Dendritic cell treated with granulocyte-macrophage colony-stimulating factor and Interleukin-4, amounts not matched to agents 40 ng/mL and 50 ng/mL, for 4 days (primary cell): ENCODE measurements at regions of chr14 and their contacts with region 1.

Region 1: GRCh38 chr14:31026395-31027118 is 378 bp upstream of the STRN3 start:
- H3K4me3 Mint-ChIP-seq: peak overlapping the region; percentile 94
- H3K27ac Mint-ChIP-seq: peak overlapping the region; percentile 98
- H3K4me1 Mint-ChIP-seq: peaks cover 41% of the 10 kb centered on the region
- H3K27me3 Mint-ChIP-seq: no peaks in the 10 kb centered on the region

Region 2: DNA sequence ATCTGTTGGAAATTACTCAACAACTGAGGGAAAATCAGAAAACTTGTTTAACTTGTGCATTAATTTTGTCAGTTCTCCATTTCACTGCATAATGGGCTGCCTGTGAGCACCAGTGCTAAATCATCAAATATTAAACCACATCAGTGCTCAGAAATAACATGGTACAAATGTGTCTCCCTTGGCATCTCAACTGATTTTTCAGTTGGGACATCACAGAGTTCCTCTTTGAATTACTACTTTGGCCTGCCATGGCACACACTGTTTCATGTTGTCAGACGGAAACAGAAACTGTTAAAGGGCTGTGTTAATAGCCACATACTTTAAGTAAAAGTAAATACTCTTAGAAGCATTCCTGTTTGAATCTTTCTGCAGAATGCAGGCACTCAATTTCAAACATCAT is 41.7 kb after region 1 on chr14:
- intact Hi-C with region 1: loop called (anchors 5 kb)
- H3K4me3 Mint-ChIP-seq: no peak overlapping the region
- H3K27ac Mint-ChIP-seq: no peak overlapping the region
- H3K4me1 Mint-ChIP-seq: no peaks in the 10 kb centered on the region
- H3K27me3 Mint-ChIP-seq: no peaks in the 10 kb centered on the region

Region 3: GRCh38 chr14:31084385-31084784 is 57.8 kb after region 1 on chr14:
- intact Hi-C with region 1: loop called (anchors 5 kb)
- H3K4me3 Mint-ChIP-seq: no peak overlapping the region
- H3K27ac Mint-ChIP-seq: no peak overlapping the region
- H3K4me1 Mint-ChIP-seq: no peaks in the 10 kb centered on the region
- H3K27me3 Mint-ChIP-seq: no peaks in the 10 kb centered on the region

Region 4: GRCh38 chr14:31194661-31195060 is 168.1 kb after region 1 on chr14:
- intact Hi-C with region 1: loop called (anchors 5 kb)
- H3K4me3 Mint-ChIP-seq: no peak overlapping the region
- H3K27ac Mint-ChIP-seq: no peak overlapping the region
- H3K4me1 Mint-ChIP-seq: peaks cover 31% of the 10 kb centered on the region
- H3K27me3 Mint-ChIP-seq: no peaks in the 10 kb centered on the region